ENCODE measurements at regions of chr1 and their contacts with region 1.

Region 1: DNA sequence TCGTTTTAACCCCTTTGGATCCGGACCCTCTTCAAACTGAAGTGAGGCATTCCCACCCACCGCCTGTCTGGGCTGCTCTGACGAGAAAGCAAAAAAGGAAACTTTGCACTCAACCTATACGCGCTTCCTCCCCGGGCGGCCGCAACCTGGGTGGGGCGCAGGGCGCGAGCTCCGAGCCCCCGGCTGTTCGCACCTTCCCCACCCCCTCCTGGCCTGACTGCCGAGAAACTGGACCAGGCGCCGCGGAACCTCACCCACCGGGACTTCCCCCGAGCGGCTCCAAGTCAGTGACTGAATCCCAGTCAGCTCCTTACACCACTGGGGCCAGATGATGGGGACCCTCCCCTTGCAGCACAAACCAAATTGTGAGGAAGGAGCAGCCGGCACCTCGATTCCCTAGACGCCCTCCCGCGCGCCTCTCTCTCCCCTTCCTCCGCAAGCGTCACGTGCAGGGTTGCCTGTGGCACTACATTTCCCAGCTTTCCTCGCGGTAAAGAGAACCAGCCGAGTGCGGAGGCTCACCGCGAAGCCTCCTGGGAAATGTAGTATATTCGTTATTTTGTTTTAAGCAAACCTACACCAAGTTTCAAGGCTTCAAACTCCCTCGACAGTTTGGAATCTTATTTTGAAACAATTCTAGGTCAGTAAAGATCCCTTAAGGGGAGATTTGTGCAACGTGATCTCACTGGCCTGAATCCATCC is at the start of gene RAB29:
- DNase-seq: peak; percentile 82
- H3K4me3 ChIP-seq: peak within 1 kb of the TSS; percentile 39 to 82 (median 66)
- H3K27ac ChIP-seq: peak within 1 kb of the TSS; percentile 55 to 78 (median 70)
- H3K4me1 ChIP-seq: peaks cover 0 to 16% (median 4%) of the 10 kb centered on the region in 4 donors
- H3K27me3 ChIP-seq: no peaks in the 10 kb centered on the region
- CTCF ChIP-seq: no peak
- EP300 ChIP-seq: no peak
- POLR2A ChIP-seq: peak; percentile 25
- total RNA-seq, gene RAB29: 1.1 to 13.9 (median 10.2) TPM

Region 2: DNA sequence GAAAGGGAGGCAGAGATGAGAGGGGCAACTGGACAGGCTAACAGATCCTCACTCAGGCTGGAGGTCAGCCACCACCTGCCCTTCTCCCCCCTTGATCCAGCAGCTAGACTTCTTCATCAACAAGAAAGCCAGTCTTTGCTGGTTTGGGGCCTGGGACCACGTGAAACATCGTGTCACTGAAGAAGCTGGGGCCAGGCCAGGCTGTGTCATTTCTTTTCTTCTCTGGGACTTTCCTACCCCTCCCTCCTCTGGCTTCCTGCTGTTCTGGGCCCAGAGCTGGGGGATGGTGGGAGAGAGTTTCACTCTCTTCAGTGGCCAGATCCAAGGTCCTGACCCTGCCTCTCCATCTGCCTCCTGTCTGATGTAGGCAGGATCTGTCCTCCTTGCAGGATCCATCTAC is 186.2 kb after region 1 on chr1:
- in situ Hi-C with region 1: loop called in 1 of 4 experiments (anchors 25 kb)
- intact Hi-C with region 1: no loop called
- DNase-seq: no peak
- H3K4me3 ChIP-seq: no peak overlapping the region
- H3K27ac ChIP-seq: no peak overlapping the region
- H3K4me1 ChIP-seq: no peaks in the 10 kb centered on the region
- H3K27me3 ChIP-seq: peaks cover 8% of the 10 kb centered on the region
- CTCF ChIP-seq: no peak
- EP300 ChIP-seq: no peak
- POLR2A ChIP-seq: no peak